Ascending aorta (tissue), 2 donors: ENCODE measurements at regions of chr12 and their contacts with region 1.

Region 1: GRCh38 chr12:14167005-14167628 is 185.7 kb upstream of the GRIN2B start:
- DNase-seq: no peak
- H3K4me3 ChIP-seq: no peak overlapping the region
- H3K27ac ChIP-seq: no peak overlapping the region
- H3K4me1 ChIP-seq: no peaks in the 10 kb centered on the region
- H3K27me3 ChIP-seq: no peaks in the 10 kb centered on the region
- CTCF ChIP-seq: peak; percentile 45 to 90 (median 79)

Region 2: GRCh38 chr12:13278249-13278787 is 888.8 kb before region 1 on chr12:
- intact Hi-C with region 1: loop called (anchors 10 kb)
- DNase-seq: peak in 1 of 2 donors; percentile 80
- H3K4me3 ChIP-seq: peak overlapping the region; percentile 44 to 48
- H3K27ac ChIP-seq: no peak overlapping the region
- H3K4me1 ChIP-seq: peaks cover 0 to 6% of the 10 kb centered on the region in 2 donors
- H3K27me3 ChIP-seq: no peaks in the 10 kb centered on the region
- CTCF ChIP-seq: peak; percentile 62 to 99 (median 98)

Region 3: GRCh38 chr12:13864081-13864673 is 302.9 kb before region 1 on chr12:
- intact Hi-C with region 1: loop called (anchors 10 kb)
- DNase-seq: peak in 1 of 2 donors; percentile 67
- H3K4me3 ChIP-seq: no peak overlapping the region
- H3K27ac ChIP-seq: no peak overlapping the region
- H3K4me1 ChIP-seq: no peaks in the 10 kb centered on the region
- H3K27me3 ChIP-seq: no peaks in the 10 kb centered on the region
- CTCF ChIP-seq: peak in 2 of 3 experiments; percentile 66 to 70